Calu3 (cell line): ENCODE measurements at regions of chr11 and their contacts with region 1.

Region 1: GRCh38 chr11:35617687-35618496 is at the start of gene FJX1:
- DNase-seq: peak; percentile 66
- H3K4me3 Mint-ChIP-seq: peak within 1 kb of the TSS; percentile 87
- H3K27ac Mint-ChIP-seq: peak within 1 kb of the TSS; percentile 88
- H3K4me1 Mint-ChIP-seq: peaks cover 48% of the 10 kb centered on the region
- H3K27me3 Mint-ChIP-seq: peaks cover 17% of the 10 kb centered on the region
- CTCF ChIP-seq: no peak
- total RNA-seq, gene FJX1: 19.1 and 19.8 TPM in 2 replicates

Region 2: DNA sequence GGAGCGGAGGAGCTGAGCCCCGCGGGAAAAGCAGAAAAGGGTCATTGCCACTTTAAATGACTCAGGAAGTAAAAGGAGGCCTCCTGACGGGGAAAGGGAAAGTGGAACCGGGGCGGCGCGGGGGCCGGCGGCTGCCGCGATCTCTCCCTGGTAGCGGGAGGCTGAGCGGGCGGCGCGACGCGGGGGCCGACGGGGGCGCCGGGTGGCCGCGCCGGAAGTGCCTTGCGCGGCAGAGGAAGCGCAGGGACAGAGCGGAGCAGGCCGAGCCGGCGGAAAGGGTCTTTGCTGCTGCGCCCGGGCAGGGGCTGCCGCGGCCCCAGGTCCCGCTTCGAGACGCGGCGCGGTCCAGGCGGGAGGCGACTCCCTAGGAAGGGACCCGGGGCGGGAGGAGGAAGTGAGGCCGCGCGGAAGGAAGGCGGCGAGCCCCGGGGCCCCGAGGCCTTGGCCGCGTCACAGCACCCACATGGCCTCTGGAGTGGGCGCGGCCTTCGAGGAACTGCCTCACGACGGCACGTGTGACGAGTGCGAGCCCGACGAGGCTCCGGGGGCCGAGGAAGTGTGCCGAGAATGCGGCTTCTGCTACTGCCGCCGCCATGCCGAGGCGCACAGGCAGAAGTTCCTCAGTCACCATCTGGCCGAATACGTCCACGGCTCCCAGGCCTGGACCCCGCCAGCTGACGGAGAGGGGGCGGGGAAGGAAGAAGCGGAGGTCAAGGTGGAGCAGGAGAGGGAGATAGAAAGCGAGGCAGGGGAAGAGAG is 44.9 kb after region 1 on chr11 and contains the start of gene TRIM44:
- CTCF ChIA-PET with region 1: interaction called, 3 read pairs
- intact Hi-C with region 1: loop called (anchors 5 kb)
- DNase-seq: peak; percentile 83
- H3K4me3 Mint-ChIP-seq: peak within 1 kb of the TSS; percentile 92
- H3K27ac Mint-ChIP-seq: peak within 1 kb of the TSS; percentile 97
- H3K4me1 Mint-ChIP-seq: peaks cover 24% of the 10 kb centered on the region
- H3K27me3 Mint-ChIP-seq: peaks cover 5% of the 10 kb centered on the region
- CTCF ChIP-seq: no peak
- total RNA-seq, gene TRIM44: 71.3 and 78.2 TPM in 2 replicates

Region 3: GRCh38 chr11:35907648-35908431 is 289.9 kb after region 1 on chr11:
- CTCF ChIA-PET with region 1: no interaction called
- intact Hi-C with region 1: loop called (anchors 2 kb)
- DNase-seq: no peak
- H3K4me3 Mint-ChIP-seq: no peak overlapping the region
- H3K27ac Mint-ChIP-seq: peak overlapping the region; percentile 1
- H3K4me1 Mint-ChIP-seq: peaks cover 34% of the 10 kb centered on the region
- H3K27me3 Mint-ChIP-seq: no peaks in the 10 kb centered on the region
- CTCF ChIP-seq: no peak

Region 4: DNA sequence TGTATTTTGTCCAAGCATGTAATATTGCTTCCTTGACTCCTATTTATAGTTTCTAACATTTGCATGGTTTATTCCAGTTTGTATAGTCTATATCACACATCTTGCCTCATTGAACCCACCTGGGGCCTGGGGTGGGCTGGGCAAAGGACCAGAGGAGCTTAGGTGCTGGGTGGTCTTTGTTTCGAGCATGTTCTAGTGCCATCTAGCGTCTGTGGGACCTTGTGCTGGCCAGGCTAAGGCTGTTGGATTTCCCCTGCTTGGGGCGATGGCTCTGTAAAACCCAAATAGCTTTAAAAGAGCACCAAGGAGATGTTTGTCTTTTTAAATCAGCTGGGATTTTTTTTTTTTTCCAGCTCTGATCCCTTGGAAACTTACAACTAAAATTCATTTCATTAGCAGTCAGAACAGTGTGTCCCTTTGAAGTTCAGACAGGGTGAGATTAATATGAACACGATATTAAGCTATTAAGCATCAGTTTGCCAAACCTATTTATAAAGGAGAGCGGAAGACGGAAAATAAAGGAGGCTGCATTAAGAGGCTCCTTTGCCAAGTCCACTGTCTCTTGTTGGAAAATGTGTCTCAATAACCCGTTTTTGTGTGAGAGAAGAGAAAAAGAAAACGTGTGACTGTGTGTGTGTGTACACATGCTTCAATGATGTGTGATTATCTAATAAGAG is 514.0 kb after region 1 on chr11:
- CTCF ChIA-PET with region 1: no interaction called
- intact Hi-C with region 1: loop called (anchors 5 kb)
- DNase-seq: peak; percentile 26
- H3K4me3 Mint-ChIP-seq: no peak overlapping the region
- H3K27ac Mint-ChIP-seq: no peak overlapping the region
- H3K4me1 Mint-ChIP-seq: no peaks in the 10 kb centered on the region
- H3K27me3 Mint-ChIP-seq: no peaks in the 10 kb centered on the region
- CTCF ChIP-seq: peak; percentile 18

Region 5: GRCh38 chr11:36258730-36259360 is 641.0 kb after region 1 on chr11:
- CTCF ChIA-PET with region 1: interaction called, 7 read pairs
- intact Hi-C with region 1: loop called (anchors 2 kb)
- DNase-seq: peak; percentile 76
- H3K4me3 Mint-ChIP-seq: no peak overlapping the region
- H3K27ac Mint-ChIP-seq: no peak overlapping the region
- H3K4me1 Mint-ChIP-seq: peaks cover 13% of the 10 kb centered on the region
- H3K27me3 Mint-ChIP-seq: peaks cover 70% of the 10 kb centered on the region
- CTCF ChIP-seq: peak; percentile 62